Activated CD4-positive, alpha-beta memory T cell treated with anti-CD3 and anti-CD28 coated beads for 36 hours (primary cell): ENCODE measurements at regions of chr7 and their contacts with region 1.

Region 1: GRCh38 chr7:12257582-12257981 is 46.5 kb downstream of the TMEM106B start:
- DNase-seq: peak; percentile 24
- H3K4me3 Mint-ChIP-seq: no peak overlapping the region
- H3K27ac Mint-ChIP-seq: no peak overlapping the region
- H3K4me1 Mint-ChIP-seq: peaks cover 8% of the 10 kb centered on the region
- H3K27me3 Mint-ChIP-seq: no peaks in the 10 kb centered on the region

Region 2: DNA sequence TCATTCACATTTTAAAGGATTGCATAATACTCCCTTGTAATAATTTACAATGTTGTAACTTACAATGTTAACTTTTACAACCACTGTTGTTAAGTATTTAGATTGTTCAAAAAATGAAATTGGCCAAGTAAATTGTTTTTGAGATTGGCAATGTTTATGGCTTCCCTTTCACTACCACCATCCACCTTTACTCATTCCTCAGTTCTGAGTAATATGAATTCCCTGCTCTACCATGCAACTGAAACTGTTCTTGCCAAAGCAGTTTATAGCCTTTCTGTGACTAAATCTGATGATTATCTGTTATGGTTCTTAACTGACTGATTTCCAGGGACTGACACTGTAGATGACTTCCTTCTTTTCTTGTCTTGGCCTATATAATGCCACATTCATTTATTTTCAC is 126.9 kb before region 1 on chr7:
- CTCF ChIA-PET with region 1: no interaction called
- POLR2A ChIA-PET with region 1: no interaction called
- intact Hi-C with region 1: loop called (anchors 2 kb)
- DNase-seq: no peak
- H3K4me3 Mint-ChIP-seq: no peak overlapping the region
- H3K27ac Mint-ChIP-seq: no peak overlapping the region
- H3K4me1 Mint-ChIP-seq: peaks cover 11% of the 10 kb centered on the region
- H3K27me3 Mint-ChIP-seq: no peaks in the 10 kb centered on the region

Region 3: GRCh38 chr7:12239806-12240205 is 17.8 kb before region 1 on chr7:
- CTCF ChIA-PET with region 1: no interaction called
- POLR2A ChIA-PET with region 1: no interaction called
- intact Hi-C with region 1: loop called (anchors 2 kb)
- DNase-seq: no peak
- H3K4me3 Mint-ChIP-seq: no peak overlapping the region
- H3K27ac Mint-ChIP-seq: no peak overlapping the region
- H3K4me1 Mint-ChIP-seq: peaks cover 11% of the 10 kb centered on the region
- H3K27me3 Mint-ChIP-seq: no peaks in the 10 kb centered on the region

Region 4: DNA sequence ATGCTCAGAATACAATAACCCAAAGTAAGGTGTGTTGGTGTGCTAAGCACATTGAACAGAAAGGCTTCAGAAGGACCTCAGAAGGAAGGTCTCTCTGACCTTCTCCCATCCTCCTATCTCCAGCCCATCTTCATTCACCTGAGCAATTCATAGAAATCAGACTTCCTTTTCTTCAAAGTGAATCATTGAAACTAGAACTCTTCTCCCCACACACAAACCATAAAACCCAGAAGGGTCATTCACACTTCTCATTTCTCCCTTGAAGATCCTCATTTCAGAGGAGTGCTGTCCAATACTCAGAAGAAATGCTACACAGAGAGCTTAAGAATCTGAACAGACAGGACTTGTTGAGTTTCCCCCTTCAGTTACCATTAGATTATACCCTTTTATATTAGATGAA is 56.6 kb after region 1 on chr7:
- CTCF ChIA-PET with region 1: no interaction called
- POLR2A ChIA-PET with region 1: no interaction called
- intact Hi-C with region 1: loop called (anchors 2 kb)
- DNase-seq: no peak
- H3K4me3 Mint-ChIP-seq: no peak overlapping the region
- H3K27ac Mint-ChIP-seq: no peak overlapping the region
- H3K4me1 Mint-ChIP-seq: peaks cover 3% of the 10 kb centered on the region
- H3K27me3 Mint-ChIP-seq: no peaks in the 10 kb centered on the region